ENCODE measurements at regions of chr12 and their contacts with region 1.

Region 1: DNA sequence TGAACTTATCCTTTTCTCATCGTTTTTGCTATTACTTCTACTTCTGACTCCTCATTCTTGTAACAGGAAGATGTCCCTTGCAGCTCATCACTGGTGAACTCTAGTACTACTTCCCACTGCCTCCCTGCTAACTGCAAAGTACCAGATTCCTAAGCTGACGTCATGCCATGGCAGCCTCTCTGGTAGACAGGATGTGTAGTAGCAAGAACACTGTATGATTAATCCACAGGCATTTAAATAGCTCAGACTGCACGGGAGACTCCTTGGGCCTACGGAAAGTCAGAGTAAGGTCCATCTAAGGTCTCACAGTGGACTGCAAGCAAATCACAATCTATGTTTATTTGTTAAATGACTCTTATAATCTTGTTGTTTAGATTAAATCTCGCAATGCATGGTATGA is 43.5 kb downstream of the DNAI7 start:
- DNase-seq: peak; percentile 86
- H3K4me3 ChIP-seq: no peak overlapping the region
- H3K27ac ChIP-seq: no peak overlapping the region
- H3K4me1 ChIP-seq: peaks cover 6% of the 10 kb centered on the region
- H3K27me3 ChIP-seq: no peaks in the 10 kb centered on the region
- CTCF ChIP-seq: no peak

Region 2: DNA sequence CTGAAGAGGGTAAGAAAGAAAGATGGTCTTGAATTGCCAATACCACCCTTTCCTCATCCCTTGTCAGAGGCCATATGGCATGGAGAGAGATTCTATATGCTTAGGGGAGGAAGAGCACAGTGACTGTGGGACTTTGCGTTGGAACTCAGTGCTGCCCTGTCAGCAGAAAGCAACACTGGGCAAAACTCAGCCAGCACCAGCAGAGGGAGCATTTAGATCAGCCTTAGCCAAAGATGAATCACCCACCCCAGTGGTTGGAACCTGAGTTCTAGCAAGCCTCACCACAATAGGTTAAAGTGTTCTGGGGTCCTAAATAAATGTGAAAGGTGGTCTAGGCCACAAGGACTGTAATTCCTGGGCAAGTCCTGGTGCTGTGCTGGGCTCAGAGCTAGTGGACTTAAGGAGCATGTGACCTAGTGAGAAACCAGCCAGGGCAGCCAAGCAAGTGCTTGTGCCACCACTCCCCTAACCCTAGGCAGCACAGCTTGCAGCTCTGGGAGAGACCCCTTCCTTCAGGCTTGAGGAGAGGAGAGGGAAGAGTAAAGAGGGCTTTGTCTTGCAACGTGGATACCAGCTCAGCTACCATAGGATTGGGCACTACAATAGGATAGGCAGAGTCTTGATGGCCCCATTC is 191.1 kb before region 1 on chr12:
- CTCF ChIA-PET with region 1: interaction called, 10 read pairs
- dilution Hi-C with region 1: no loop called
- in situ Hi-C with region 1: no loop called
- intact Hi-C with region 1: loop called (anchors 1 kb)
- DNase-seq: peak; percentile 52
- H3K4me3 ChIP-seq: no peak overlapping the region
- H3K27ac ChIP-seq: no peak overlapping the region
- H3K4me1 ChIP-seq: no peaks in the 10 kb centered on the region
- H3K27me3 ChIP-seq: no peaks in the 10 kb centered on the region
- CTCF ChIP-seq: peak; percentile 81 to 84